HCT116 (cell line): ENCODE measurements at regions of chr6 and their contacts with region 1.

Region 1: DNA sequence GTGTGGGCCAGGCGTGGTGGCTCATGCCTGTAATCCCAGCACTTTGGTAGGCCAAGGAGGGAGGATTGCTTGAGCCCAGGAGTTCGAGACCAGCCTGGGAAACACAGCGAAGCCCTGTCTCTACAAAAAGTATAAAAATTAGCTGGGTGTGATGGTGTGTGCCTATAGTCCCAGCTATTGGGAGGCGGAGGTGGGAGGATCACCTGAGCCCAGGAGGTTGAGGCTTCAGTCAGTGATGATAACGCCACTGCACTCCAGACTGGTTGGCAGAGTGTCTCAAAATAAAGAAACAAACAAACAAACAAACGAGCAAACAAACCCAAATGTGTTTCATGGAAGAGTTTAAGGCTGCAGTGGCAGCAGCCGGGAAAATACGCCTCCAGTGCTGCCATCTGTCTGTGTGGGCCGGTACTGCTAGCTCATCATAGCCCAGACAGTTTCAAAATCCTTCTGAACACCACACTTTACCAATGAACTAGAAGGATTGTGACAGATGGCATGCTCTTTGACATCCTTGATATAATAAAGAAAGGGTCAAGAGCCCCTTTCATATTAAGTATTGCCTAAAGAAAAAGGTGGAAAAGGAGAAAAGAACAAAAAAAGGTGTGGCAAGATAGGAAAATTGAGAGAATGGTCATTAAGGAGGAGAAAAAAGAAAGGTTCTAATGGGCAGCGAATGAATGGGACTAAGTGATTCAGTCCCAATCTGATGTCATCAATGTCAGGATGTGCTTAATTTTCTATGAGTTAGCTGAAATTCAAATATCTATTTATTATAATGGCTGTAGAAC is 298.6 kb downstream of the SYNE1 start:
- DNase-seq: no peak
- ATAC-seq: peak; percentile 93
- H3K4me3 ChIP-seq: no peak overlapping the region
- H3K27ac ChIP-seq: no peak overlapping the region
- H3K4me1 ChIP-seq: no peaks in the 10 kb centered on the region
- H3K27me3 ChIP-seq: no peaks in the 10 kb centered on the region
- CTCF ChIP-seq: peak; percentile 27 to 97 (median 91); a peak in 5 of 6 replicates
- POLR2A ChIP-seq: no peak
- RAD21 ChIP-seq: peak; percentile 59

Region 2: GRCh38 chr6:152316024-152316423 is 22.5 kb before region 1 on chr6:
- CTCF ChIA-PET with region 1: interaction called, 11 read pairs
- POLR2A ChIA-PET with region 1: no interaction called
- RAD21 ChIA-PET with region 1: no interaction called
- intact Hi-C with region 1: no loop called
- DNase-seq: no peak
- ATAC-seq: no peak
- H3K4me3 ChIP-seq: no peak overlapping the region
- H3K27ac ChIP-seq: no peak overlapping the region
- H3K4me1 ChIP-seq: peaks cover 0 to 8% of the 10 kb centered on the region in 2 experiments; a peak in 2 of 4 replicates
- H3K27me3 ChIP-seq: no peaks in the 10 kb centered on the region
- CTCF ChIP-seq: no peak
- POLR2A ChIP-seq: no peak
- RAD21 ChIP-seq: no peak

Region 3: GRCh38 chr6:152323376-152323775 is 15.2 kb before region 1 on chr6:
- CTCF ChIA-PET with region 1: interaction called, 19 read pairs
- POLR2A ChIA-PET with region 1: no interaction called
- RAD21 ChIA-PET with region 1: no interaction called
- intact Hi-C with region 1: no loop called
- DNase-seq: no peak
- ATAC-seq: no peak
- H3K4me3 ChIP-seq: no peak overlapping the region
- H3K27ac ChIP-seq: no peak overlapping the region
- H3K4me1 ChIP-seq: no peaks in the 10 kb centered on the region
- H3K27me3 ChIP-seq: no peaks in the 10 kb centered on the region
- CTCF ChIP-seq: no peak
- POLR2A ChIP-seq: no peak
- RAD21 ChIP-seq: no peak

Region 4: GRCh38 chr6:152351110-152351509 is 12.6 kb after region 1 on chr6:
- CTCF ChIA-PET with region 1: interaction called, 13 read pairs
- POLR2A ChIA-PET with region 1: no interaction called
- RAD21 ChIA-PET with region 1: no interaction called
- intact Hi-C with region 1: no loop called
- DNase-seq: no peak
- ATAC-seq: no peak
- H3K4me3 ChIP-seq: no peak overlapping the region
- H3K27ac ChIP-seq: no peak overlapping the region
- H3K4me1 ChIP-seq: no peaks in the 10 kb centered on the region
- H3K27me3 ChIP-seq: no peaks in the 10 kb centered on the region
- CTCF ChIP-seq: no peak
- POLR2A ChIP-seq: no peak
- RAD21 ChIP-seq: no peak